CD8-positive, alpha-beta T cell (primary cell): ENCODE measurements at regions of chr7 and their contacts with region 1.

Region 1: DNA sequence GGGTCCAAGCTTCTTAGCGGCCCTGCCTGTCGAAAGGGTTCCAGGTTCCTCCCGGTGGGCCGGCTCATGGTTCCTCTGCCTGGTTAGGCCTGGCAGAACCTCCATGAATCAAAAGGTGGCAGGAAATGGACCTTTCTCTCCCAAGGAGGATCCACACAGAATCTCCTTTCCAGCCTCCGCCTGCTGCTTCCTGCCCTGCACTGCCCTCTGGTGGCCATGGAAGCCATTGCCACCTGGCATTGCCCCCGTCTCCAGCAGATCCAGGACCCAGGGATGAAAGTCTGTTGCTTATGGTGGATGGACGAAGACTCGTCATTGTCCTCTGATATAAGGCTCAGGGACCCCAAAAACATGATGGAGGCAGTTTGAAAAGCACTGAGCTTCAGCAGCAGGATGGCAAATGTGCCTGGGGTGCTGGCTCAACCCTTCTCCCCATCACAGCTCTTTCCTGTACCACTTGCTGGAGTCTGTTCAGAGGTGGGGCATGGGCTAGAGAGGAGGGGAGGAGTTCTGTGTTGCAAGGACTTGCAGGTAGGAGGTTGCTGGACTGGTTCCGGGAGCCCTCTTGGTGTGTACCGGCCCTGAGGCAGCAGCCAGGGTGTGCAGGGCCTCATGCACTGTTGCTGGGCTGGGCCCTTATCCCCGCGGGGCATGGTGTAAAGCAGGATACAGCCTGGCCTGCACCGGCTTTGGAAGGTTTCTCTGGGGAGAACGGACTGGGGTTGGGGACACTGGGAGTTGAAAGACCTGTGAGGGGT is 11.3 kb upstream of the INMT start:
- DNase-seq: peak; percentile 51 to 91 (median 78)
- ATAC-seq: peak; percentile 57
- H3K4me3 ChIP-seq: no peak overlapping the region
- H3K4me3 Mint-ChIP-seq: no peak overlapping the region
- H3K27ac ChIP-seq: no peak overlapping the region
- H3K27ac Mint-ChIP-seq: peak overlapping the region; percentile 24
- H3K4me1 ChIP-seq: peaks cover 38% of the 10 kb centered on the region
- H3K4me1 Mint-ChIP-seq: peaks cover 37% of the 10 kb centered on the region
- H3K27me3 ChIP-seq: no peaks in the 10 kb centered on the region
- H3K27me3 Mint-ChIP-seq: no peaks in the 10 kb centered on the region
- CTCF ChIP-seq: peak; percentile 99

Region 2: DNA sequence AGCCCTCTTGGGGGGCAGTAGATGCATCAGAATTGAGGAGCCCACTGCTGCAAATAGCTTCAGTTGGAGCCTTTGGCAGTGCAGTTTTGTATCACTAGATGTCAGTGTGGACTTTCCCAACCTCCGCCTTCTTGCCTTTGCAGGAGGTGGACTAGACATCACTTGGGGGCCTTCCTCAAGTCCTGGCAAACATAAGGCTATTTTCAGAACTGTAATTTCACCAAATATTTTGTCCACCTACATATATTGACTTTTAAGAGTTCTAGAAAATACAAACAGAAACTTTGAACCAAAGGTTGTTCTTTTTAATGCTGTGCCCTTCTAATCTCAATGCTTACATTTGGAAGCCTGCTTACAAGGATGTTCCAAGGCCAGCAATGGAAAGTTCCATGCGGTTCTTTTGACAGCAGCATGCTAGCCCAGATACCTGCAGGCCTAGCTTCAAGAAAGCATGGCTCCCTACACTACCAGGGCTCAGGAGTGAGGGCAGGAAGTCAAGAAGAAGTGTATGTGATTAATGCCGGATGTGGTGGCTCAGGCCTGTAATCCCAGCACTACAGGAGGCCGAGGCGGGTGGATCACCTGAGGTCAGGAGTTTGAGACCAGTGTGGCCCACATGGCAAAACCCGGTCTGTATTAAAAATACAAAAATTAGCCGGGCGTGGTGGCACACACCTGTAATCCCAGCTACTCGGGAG is 464.3 kb before region 1 on chr7:
- CTCF ChIA-PET with region 1: interaction called, 3 read pairs
- POLR2A ChIA-PET with region 1: no interaction called
- intact Hi-C with region 1: loop called in 1 of 2 experiments (anchors 5 kb)
- DNase-seq: peak; percentile 10 to 77 (median 55)
- ATAC-seq: peak; percentile 86
- H3K4me3 ChIP-seq: no peak overlapping the region
- H3K4me3 Mint-ChIP-seq: no peak overlapping the region
- H3K27ac ChIP-seq: no peak overlapping the region
- H3K27ac Mint-ChIP-seq: no peak overlapping the region
- H3K4me1 ChIP-seq: no peaks in the 10 kb centered on the region
- H3K4me1 Mint-ChIP-seq: peaks cover 9% of the 10 kb centered on the region
- H3K27me3 ChIP-seq: no peaks in the 10 kb centered on the region
- H3K27me3 Mint-ChIP-seq: no peaks in the 10 kb centered on the region
- CTCF ChIP-seq: peak; percentile 69

Region 3: DNA sequence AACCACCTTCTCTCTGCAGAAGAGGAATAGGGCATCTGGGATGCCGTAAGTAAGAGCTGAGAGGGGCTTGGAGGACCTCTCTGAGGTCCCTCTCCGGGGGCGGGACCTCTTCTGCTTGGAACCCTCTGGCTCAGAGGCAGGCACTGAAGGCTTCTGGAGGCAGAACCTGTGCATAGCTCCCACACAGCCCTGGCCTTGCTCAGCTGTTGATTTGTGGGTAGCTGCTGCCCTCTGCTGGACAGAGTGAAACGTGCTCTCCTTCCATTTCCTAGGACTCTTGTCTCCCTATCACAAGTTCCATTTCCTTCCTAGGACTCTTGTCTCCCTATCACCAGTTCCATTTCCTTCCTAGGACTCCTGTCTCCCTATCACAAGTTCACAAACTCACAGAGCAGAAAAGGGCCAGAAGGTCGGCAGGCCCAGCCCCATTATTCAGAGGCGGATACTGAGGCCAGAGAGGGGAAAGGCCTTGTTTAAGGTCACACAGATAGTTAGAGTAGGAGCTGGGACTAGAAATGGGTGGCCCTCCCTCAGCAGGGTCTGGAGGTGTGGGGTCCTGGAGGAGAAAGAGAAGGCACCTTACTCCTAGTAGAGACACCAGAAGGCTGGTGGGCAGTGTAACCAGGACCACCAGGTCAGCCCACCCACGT is 176.2 kb before region 1 on chr7:
- CTCF ChIA-PET with region 1: interaction called, 22 read pairs
- POLR2A ChIA-PET with region 1: no interaction called
- intact Hi-C with region 1: no loop called
- DNase-seq: peak; percentile 60 to 83 (median 76)
- ATAC-seq: peak; percentile 95
- H3K4me3 ChIP-seq: no peak overlapping the region
- H3K4me3 Mint-ChIP-seq: no peak overlapping the region
- H3K27ac ChIP-seq: no peak overlapping the region
- H3K27ac Mint-ChIP-seq: peak overlapping the region; percentile 37
- H3K4me1 ChIP-seq: no peaks in the 10 kb centered on the region
- H3K4me1 Mint-ChIP-seq: no peaks in the 10 kb centered on the region
- H3K27me3 ChIP-seq: no peaks in the 10 kb centered on the region
- H3K27me3 Mint-ChIP-seq: no peaks in the 10 kb centered on the region
- CTCF ChIP-seq: peak; percentile 74

Region 4: GRCh38 chr7:30660331-30661255 is 80.0 kb before region 1 on chr7:
- CTCF ChIA-PET with region 1: interaction called, 27 read pairs
- POLR2A ChIA-PET with region 1: no interaction called
- intact Hi-C with region 1: no loop called
- DNase-seq: no peak
- ATAC-seq: no peak
- H3K4me3 ChIP-seq: no peak overlapping the region
- H3K4me3 Mint-ChIP-seq: no peak overlapping the region
- H3K27ac ChIP-seq: no peak overlapping the region
- H3K27ac Mint-ChIP-seq: no peak overlapping the region
- H3K4me1 ChIP-seq: no peaks in the 10 kb centered on the region
- H3K4me1 Mint-ChIP-seq: no peaks in the 10 kb centered on the region
- H3K27me3 ChIP-seq: no peaks in the 10 kb centered on the region
- H3K27me3 Mint-ChIP-seq: peaks cover 4% of the 10 kb centered on the region
- CTCF ChIP-seq: no peak

Region 5: DNA sequence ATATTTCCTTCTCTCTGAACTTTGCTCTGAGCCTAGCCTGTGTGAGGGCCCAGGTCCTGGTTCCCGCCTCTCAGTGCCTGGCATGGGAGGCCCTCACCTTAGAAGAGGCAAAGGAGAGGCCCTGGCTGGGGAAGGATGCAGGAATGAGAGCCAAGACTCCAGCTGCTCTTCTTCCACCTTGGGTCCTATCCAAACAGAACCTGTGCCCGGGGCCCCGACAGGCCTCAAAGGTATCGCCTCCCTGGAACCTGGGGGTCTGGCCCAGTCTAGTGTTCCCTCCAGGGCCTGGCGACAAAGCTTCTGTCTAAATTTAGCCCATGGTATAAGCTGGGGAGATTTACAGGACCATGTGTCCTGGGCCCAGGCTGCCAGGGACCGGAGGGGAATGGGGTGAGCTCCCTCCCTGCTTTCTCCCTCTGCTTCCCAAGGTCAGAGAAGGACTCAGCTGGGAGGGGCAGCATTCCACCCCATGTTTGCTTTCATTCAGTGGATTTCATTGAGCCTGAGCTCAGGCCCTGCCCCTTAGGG is 46.3 kb before region 1 on chr7:
- CTCF ChIA-PET with region 1: interaction called, 21 read pairs
- POLR2A ChIA-PET with region 1: no interaction called
- intact Hi-C with region 1: no loop called
- DNase-seq: no peak
- ATAC-seq: no peak
- H3K4me3 ChIP-seq: no peak overlapping the region
- H3K4me3 Mint-ChIP-seq: no peak overlapping the region
- H3K27ac ChIP-seq: no peak overlapping the region
- H3K27ac Mint-ChIP-seq: no peak overlapping the region
- H3K4me1 ChIP-seq: no peaks in the 10 kb centered on the region
- H3K4me1 Mint-ChIP-seq: peaks cover 3% of the 10 kb centered on the region
- H3K27me3 ChIP-seq: no peaks in the 10 kb centered on the region
- H3K27me3 Mint-ChIP-seq: peaks cover 3% of the 10 kb centered on the region
- CTCF ChIP-seq: no peak

Region 6: GRCh38 chr7:30717181-30717580 is 23.4 kb before region 1 on chr7:
- CTCF ChIA-PET with region 1: interaction called, 228 read pairs
- POLR2A ChIA-PET with region 1: no interaction called
- intact Hi-C with region 1: no loop called
- DNase-seq: no peak
- ATAC-seq: no peak
- H3K4me3 ChIP-seq: no peak overlapping the region
- H3K4me3 Mint-ChIP-seq: no peak overlapping the region
- H3K27ac ChIP-seq: no peak overlapping the region
- H3K27ac Mint-ChIP-seq: no peak overlapping the region
- H3K4me1 ChIP-seq: no peaks in the 10 kb centered on the region
- H3K4me1 Mint-ChIP-seq: no peaks in the 10 kb centered on the region
- H3K27me3 ChIP-seq: no peaks in the 10 kb centered on the region
- H3K27me3 Mint-ChIP-seq: no peaks in the 10 kb centered on the region
- CTCF ChIP-seq: no peak